Activated CD8-positive, alpha-beta memory T cell treated with anti-CD3 and anti-CD28 coated beads, Interleukin-2, amount 10 ng/mL, durations not matched to agents 7 days and 5 days (primary cell): ENCODE measurements at regions of chr2 and their contacts with region 1.

Region 1: GRCh38 chr2:222690564-222691200 is 19.2 kb downstream of the MOGAT1 start:
- DNase-seq: peak; percentile 84
- ATAC-seq: peak; percentile 96
- H3K4me3 Mint-ChIP-seq: no peak overlapping the region
- H3K27ac Mint-ChIP-seq: no peak overlapping the region
- H3K4me1 Mint-ChIP-seq: peaks cover 8% of the 10 kb centered on the region
- H3K27me3 Mint-ChIP-seq: peaks cover 19% of the 10 kb centered on the region

Region 2: GRCh38 chr2:222214885-222215284 is 475.8 kb before region 1 on chr2:
- CTCF ChIA-PET with region 1: no interaction called
- DNase-seq: no peak
- ATAC-seq: no peak
- H3K4me3 Mint-ChIP-seq: no peak overlapping the region
- H3K27ac Mint-ChIP-seq: no peak overlapping the region
- H3K4me1 Mint-ChIP-seq: no peaks in the 10 kb centered on the region
- H3K27me3 Mint-ChIP-seq: no peaks in the 10 kb centered on the region

Region 3: GRCh38 chr2:222707689-222708525 is 17.2 kb after region 1 on chr2:
- CTCF ChIA-PET with region 1: interaction called, 11 read pairs
- DNase-seq: peak; percentile 81
- ATAC-seq: peak; percentile 89
- H3K4me3 Mint-ChIP-seq: no peak overlapping the region
- H3K27ac Mint-ChIP-seq: peak overlapping the region; percentile 21
- H3K4me1 Mint-ChIP-seq: peaks cover 20% of the 10 kb centered on the region
- H3K27me3 Mint-ChIP-seq: peaks cover 54% of the 10 kb centered on the region

Region 4: DNA sequence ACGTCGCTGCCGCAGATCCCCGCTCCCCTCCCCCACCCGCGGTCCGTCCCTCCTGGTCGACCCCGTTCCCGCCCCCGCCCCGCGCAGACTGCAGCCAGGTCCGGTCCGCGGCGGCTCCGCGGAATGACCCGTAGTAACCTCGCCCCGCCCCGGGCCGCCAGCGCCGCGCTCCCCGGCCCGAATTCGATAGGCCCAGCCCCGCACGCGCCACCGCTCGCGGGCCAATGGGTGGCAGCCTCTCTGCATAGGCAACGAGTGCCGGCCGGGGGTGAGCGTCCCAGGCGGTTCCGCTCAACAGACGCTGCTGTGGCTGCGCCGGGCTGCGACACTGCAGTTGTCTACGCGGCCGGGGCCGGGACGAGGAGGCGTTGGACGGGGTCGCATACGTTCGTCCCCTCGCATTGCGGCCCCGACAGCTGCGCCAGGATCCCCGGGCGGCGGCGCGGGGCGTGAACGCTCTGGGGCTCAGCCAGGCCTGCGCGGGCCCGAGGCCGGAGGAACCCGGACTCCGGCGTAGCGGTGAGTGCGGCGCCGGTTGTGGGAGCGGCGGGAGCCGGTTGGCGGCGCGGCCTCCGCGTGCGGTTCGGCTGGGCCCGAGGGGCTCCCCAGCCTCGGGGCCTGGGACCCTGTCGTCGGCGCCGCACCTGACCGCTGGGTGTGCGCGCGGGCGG is 170.2 kb after region 1 on chr2 and contains the start of gene ACSL3:
- CTCF ChIA-PET with region 1: interaction called, 11 read pairs
- DNase-seq: peak; percentile 97
- ATAC-seq: peak; percentile 99
- H3K4me3 Mint-ChIP-seq: peak within 1 kb of the TSS; percentile 66
- H3K27ac Mint-ChIP-seq: peak within 1 kb of the TSS; percentile 81
- H3K4me1 Mint-ChIP-seq: peaks cover 13% of the 10 kb centered on the region
- H3K27me3 Mint-ChIP-seq: peaks cover 19% of the 10 kb centered on the region
- total RNA-seq, gene ACSL3: 32.1 to 58.7 TPM

Region 5: DNA sequence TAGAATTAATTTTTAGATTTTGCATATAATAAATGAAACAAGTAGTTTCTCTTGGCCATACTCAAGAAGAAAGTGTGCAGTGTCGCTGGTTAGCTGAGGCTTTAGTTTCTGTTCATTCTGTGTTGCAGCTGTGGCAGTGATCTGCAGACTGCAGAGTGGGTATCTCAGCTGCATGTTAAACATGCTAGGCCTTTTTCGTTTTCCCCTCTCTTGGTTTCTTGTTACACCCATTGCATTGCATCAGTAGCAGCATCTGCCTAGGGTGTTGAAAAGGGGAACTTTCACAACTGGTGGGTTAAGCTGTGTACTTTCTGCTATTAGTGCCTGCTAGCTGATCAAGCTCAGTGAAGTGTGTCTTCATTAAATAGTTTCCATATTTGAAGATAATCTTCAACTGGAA is 221.4 kb after region 1 on chr2:
- CTCF ChIA-PET with region 1: interaction called, 12 read pairs
- DNase-seq: no peak
- ATAC-seq: peak; percentile 23
- H3K4me3 Mint-ChIP-seq: no peak overlapping the region
- H3K27ac Mint-ChIP-seq: no peak overlapping the region
- H3K4me1 Mint-ChIP-seq: peaks cover 17% of the 10 kb centered on the region
- H3K27me3 Mint-ChIP-seq: no peaks in the 10 kb centered on the region

Region 6: DNA sequence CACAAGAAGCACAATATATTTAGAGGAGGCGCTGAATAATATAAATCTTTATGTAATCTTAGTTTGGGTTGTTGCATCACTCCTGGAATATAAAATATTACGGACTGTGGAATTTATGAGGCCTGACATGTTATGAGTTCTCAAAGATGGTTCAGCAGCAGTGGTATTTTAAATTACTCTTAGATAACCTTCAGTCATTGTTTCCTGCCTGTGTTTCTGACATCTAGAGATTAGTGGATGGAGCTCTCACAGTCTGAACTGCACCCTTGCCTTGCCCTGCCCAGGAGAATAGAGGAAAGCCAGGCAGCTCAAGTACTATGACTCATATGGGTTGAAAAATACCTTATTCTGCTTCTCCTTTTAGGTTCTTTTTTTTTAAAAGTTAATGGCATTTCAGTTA is 240.2 kb after region 1 on chr2:
- CTCF ChIA-PET with region 1: interaction called, 15 read pairs
- DNase-seq: no peak
- ATAC-seq: no peak
- H3K4me3 Mint-ChIP-seq: no peak overlapping the region
- H3K27ac Mint-ChIP-seq: no peak overlapping the region
- H3K4me1 Mint-ChIP-seq: no peaks in the 10 kb centered on the region
- H3K27me3 Mint-ChIP-seq: no peaks in the 10 kb centered on the region

Region 7: GRCh38 chr2:222939208-222939856 is 248.7 kb after region 1 on chr2:
- CTCF ChIA-PET with region 1: interaction called, 43 read pairs
- DNase-seq: peak; percentile 81
- ATAC-seq: peak; percentile 86
- H3K4me3 Mint-ChIP-seq: no peak overlapping the region
- H3K27ac Mint-ChIP-seq: no peak overlapping the region
- H3K4me1 Mint-ChIP-seq: peaks cover 8% of the 10 kb centered on the region
- H3K27me3 Mint-ChIP-seq: no peaks in the 10 kb centered on the region

Region 8: DNA sequence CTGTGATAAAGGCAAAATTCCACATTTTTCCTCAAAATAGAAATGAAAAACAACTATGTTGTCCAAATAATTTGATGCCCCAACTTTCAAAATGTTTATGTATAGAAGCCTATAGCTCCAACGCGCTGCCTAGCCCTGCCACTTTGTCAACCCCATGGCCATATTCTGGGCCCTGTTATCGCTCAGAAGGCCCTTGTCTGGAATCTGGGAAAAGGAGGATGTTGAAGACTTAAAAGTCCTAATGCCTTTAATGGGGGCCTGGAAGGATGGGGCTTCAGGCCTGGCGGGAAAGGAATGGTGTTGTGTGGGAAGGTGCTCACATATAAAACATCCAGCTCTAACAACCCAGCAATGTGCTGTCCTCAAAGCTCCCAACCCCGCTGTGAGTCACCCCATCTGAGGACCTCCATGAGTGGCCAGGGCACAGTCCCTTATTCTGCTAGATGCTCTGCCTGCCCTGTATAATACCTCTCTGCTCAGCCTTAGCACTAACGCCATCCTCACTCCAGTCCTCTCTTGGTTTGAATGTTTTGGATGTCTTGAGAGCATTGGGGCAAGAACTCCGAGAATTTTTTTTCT is 256.1 kb after region 1 on chr2:
- CTCF ChIA-PET with region 1: interaction called, 12 read pairs
- DNase-seq: no peak
- ATAC-seq: no peak
- H3K4me3 Mint-ChIP-seq: no peak overlapping the region
- H3K27ac Mint-ChIP-seq: no peak overlapping the region
- H3K4me1 Mint-ChIP-seq: peaks cover 5% of the 10 kb centered on the region
- H3K27me3 Mint-ChIP-seq: peaks cover 18% of the 10 kb centered on the region